ENCODE measurements at regions of chr14 and their contacts with region 1.

Region 1: GRCh38 chr14:68177723-68178681 is 358.4 kb downstream of the RAD51B start:
- DNase-seq: no peak
- H3K4me3 ChIP-seq: no peak overlapping the region
- H3K4me3 Mint-ChIP-seq: no peak overlapping the region
- H3K27ac Mint-ChIP-seq: no peak overlapping the region
- H3K4me1 ChIP-seq: peaks cover 26% of the 10 kb centered on the region
- H3K4me1 Mint-ChIP-seq: peaks cover 11% of the 10 kb centered on the region
- H3K27me3 ChIP-seq: no peaks in the 10 kb centered on the region
- H3K27me3 Mint-ChIP-seq: no peaks in the 10 kb centered on the region
- CTCF ChIP-seq: no peak

Region 2: DNA sequence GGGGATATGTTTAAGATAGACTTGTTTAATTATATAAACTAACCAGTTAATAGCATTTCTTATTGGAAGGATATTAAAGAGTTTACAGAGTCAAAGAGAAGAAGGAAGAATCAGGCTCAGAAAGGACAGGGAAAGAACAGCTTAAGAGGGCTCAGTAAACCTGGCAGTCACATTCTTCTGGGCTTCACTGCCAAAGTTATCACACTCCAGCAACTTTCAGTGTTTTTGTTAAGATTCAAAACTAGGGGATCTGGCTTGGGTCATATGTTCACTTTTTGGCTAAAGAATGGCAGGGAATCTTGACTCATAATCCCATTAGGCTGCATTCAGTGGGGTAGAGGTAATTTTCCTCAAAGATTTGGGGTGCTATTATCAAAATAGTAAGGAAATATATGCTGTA is 46.1 kb before region 1 on chr14:
- CTCF ChIA-PET with region 1: no interaction called
- POLR2A ChIA-PET with region 1: no interaction called
- intact Hi-C with region 1: loop called (anchors 2 kb)
- DNase-seq: no peak
- H3K4me3 ChIP-seq: no peak overlapping the region
- H3K4me3 Mint-ChIP-seq: no peak overlapping the region
- H3K27ac Mint-ChIP-seq: no peak overlapping the region
- H3K4me1 ChIP-seq: no peaks in the 10 kb centered on the region
- H3K4me1 Mint-ChIP-seq: peaks cover 5% of the 10 kb centered on the region
- H3K27me3 ChIP-seq: no peaks in the 10 kb centered on the region
- H3K27me3 Mint-ChIP-seq: no peaks in the 10 kb centered on the region
- CTCF ChIP-seq: no peak